AG04449 (cell line): ENCODE measurements at regions of chr12 and their contacts with region 1.

Region 1: GRCh38 chr12:751192-751998 is 984 bp upstream of the WNK1 start:
- DNase-seq: no peak
- H3K4me3 ChIP-seq: peak overlapping the region; percentile 60
- CTCF ChIP-seq: peak; percentile 88

Region 2: DNA sequence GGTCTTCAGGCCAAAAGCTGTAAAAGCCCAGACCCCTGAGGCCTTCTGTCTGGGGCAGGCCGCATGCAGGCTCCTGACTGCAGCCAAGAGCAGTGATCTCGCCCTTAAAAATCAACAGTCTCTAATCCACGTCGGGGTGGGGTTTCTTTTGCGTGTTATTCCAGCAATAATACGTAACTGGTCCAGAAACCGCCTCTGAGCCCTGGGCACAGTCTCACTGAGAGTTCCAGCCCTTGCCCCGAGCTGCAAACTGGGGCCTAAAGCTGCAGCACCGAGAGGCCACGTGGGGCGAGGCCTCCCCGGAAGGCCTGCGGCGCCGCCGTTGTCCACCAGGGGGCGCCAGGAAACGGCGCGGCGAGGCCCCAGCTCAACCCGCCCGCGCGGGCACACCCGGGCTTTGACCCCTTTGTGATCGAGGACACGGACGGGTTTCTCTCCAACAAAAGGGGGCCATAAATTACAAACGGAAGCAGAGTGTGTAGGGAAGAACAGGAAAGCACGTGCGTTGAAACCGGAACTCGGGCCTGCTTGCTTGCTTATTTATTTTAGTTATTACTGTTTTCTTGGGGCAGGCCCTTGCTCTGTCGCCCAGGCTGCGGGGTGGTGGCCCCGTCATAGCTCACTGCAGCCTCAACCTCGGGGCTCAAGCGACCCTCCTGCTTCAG is 175.3 kb before region 1 on chr12:
- CTCF ChIA-PET with region 1: interaction called, 202 read pairs
- POLR2A ChIA-PET with region 1: interaction called, 11 read pairs
- DNase-seq: no peak
- H3K4me3 ChIP-seq: peak overlapping the region; percentile 8; the same call in 1 of the 2 replicates
- CTCF ChIP-seq: peak; percentile 92

Region 3: DNA sequence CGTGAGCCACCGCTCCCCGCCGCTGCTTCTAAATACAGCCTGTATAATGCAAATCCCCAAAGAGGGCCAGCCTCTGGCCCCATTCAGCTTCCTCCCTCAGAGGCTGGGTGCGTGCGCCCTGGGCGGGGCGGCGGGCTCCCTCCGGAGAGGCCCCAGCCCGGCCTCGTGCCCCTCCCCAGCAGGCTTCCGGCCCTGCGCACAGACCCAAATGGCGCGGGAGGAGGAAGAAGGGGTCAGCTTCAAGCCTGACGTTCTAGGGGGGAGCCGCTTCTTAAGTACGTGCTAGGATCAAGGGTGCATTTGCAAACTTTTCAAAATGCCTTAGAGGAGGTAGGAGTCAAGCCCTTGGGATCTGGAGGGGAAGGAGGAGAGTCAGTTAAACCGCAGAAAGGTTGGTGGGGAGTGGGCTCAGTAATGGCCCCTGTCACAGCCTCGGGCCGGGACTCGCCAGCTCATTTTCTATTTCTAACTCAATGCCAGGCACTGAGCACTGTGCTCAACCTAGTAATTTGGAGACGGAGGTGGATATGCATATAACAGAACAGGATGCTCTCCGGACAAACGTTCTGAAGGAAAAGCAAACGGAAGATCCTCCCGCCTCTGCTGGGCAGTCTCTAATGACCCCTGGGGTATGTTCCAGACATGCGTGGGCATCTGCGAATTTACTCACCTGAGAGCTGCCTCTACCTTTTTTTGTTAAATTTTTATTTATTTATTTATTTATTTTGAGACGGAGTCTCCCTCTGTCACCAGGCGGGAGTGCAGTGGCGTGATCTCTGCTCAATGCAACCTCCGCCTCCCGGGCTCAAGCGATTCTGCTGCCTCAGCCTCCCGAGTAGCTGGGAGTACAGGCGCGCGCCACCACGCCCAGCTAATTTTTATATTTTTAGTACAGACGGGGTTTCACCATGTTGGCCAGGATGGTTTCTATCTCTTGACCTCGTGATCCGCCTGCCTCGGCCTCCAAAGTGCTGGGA is 120.5 kb before region 1 on chr12:
- CTCF ChIA-PET with region 1: interaction called, 14 read pairs
- POLR2A ChIA-PET with region 1: no interaction called
- DNase-seq: no peak
- H3K4me3 ChIP-seq: no peak overlapping the region
- CTCF ChIP-seq: no peak

Region 4: DNA sequence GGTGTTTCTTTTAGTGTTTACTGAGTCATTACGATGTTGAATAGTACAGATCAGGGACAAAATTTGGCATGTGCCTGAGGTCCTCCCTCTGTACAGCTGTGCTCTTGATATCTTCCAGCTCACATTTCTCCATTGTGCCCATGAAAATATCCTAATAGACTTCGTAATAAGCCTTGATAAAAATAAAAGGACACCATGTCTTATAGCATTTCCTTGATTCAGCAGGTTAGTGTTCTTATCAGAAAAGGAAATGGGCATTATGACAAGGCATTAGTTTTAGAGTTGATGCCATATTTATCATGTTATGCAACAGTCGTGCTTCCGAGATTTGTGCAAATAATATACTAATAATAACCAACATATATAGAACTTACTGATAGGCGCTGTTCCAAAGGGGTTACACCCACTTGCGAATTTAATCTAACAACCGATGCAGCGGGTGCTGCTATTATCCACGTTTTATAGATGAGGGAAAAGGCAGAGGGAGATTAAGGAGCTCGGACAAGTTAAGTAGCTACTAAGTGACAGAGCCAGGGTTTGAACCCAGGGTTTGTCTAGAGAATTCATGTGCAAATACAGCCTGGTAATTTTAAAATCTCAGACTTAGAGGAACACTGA is 14.2 kb before region 1 on chr12:
- CTCF ChIA-PET with region 1: interaction called, 47 read pairs
- POLR2A ChIA-PET with region 1: no interaction called
- DNase-seq: no peak
- H3K4me3 ChIP-seq: no peak overlapping the region
- CTCF ChIP-seq: no peak

Region 5: GRCh38 chr12:779745-780734 is 28.6 kb after region 1 on chr12:
- CTCF ChIA-PET with region 1: interaction called, 22 read pairs
- POLR2A ChIA-PET with region 1: no interaction called
- DNase-seq: peak; percentile 66
- H3K4me3 ChIP-seq: 0 out of 2 replicates have a peak overlapping the region, but pooled peaks have one; percentile 12
- CTCF ChIP-seq: no peak